ENCODE measurements at regions of chr16 and their contacts with region 1.

Region 1: DNA sequence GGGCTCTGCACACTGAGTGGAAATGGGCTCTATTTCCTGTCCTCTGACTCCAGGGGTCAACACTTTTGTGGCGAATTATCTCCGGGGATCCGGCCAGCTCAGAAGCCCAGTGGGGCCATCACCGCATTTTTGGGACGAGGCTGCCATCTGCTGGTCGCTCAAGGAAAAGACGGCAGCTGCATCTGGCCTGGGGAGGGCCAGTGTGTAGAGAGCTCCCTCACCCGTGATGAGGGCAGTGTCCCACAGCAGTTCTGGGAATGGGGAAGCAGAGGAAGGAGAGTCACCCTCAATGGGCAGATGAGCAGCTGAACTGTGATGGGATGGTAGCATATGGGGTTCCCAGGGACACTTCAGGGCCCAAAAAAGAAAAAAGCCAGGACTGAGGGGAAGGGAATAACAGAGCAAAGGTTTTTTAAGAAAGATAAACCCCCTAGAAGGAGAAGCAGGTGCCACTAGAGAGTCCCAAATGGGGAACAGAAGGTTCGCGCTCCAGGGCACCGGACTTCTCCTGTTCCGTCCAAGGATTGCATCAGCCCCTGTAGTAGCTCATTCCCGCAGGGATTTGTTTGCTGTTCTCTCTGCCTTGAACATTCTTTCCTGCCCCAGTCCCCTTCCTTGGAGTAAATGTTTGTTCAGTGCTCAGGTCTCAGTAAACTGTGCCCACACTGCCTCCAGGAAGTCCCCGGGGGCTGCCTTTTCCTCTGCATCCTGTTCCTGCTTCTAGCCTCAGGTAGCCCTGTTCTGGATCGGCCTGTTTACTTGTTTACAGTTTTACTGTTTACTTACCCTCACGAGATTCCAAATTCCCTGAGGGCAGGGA is 9.3 kb upstream of the ABCC12 start:
- DNase-seq: peak; percentile 23 to 84
- H3K4me3 ChIP-seq: no peak overlapping the region
- H3K27ac ChIP-seq: no peak overlapping the region
- H3K4me1 ChIP-seq: peaks cover 0 to 3% of the 10 kb centered on the region in 2 donors
- H3K27me3 ChIP-seq: no peaks in the 10 kb centered on the region
- CTCF ChIP-seq: peak; percentile 69 to 85 (median 76)

Region 2: GRCh38 chr16:46947900-46948547 is 1217.1 kb before region 1 on chr16:
- intact Hi-C with region 1: loop called (anchors 10 kb)
- DNase-seq: no peak
- H3K4me3 ChIP-seq: no peak overlapping the region
- H3K27ac ChIP-seq: no peak overlapping the region
- H3K4me1 ChIP-seq: no peaks in the 10 kb centered on the region
- H3K27me3 ChIP-seq: no peaks in the 10 kb centered on the region
- CTCF ChIP-seq: peak in 2 of 3 experiments; percentile 18 to 46

Region 3: GRCh38 chr16:47141773-47142485 is 1023.2 kb before region 1 on chr16:
- intact Hi-C with region 1: loop called (anchors 2 kb)
- DNase-seq: peak; percentile 35 to 83
- H3K4me3 ChIP-seq: peak overlapping the region; percentile 44 to 77
- H3K27ac ChIP-seq: no peak overlapping the region
- H3K4me1 ChIP-seq: peaks cover 9% of the 10 kb centered on the region in 2 donors
- H3K27me3 ChIP-seq: no peaks in the 10 kb centered on the region
- CTCF ChIP-seq: peak; percentile 73 to 89 (median 78)